ENCODE measurements at regions of chr5 and their contacts with region 1.

Region 1: DNA sequence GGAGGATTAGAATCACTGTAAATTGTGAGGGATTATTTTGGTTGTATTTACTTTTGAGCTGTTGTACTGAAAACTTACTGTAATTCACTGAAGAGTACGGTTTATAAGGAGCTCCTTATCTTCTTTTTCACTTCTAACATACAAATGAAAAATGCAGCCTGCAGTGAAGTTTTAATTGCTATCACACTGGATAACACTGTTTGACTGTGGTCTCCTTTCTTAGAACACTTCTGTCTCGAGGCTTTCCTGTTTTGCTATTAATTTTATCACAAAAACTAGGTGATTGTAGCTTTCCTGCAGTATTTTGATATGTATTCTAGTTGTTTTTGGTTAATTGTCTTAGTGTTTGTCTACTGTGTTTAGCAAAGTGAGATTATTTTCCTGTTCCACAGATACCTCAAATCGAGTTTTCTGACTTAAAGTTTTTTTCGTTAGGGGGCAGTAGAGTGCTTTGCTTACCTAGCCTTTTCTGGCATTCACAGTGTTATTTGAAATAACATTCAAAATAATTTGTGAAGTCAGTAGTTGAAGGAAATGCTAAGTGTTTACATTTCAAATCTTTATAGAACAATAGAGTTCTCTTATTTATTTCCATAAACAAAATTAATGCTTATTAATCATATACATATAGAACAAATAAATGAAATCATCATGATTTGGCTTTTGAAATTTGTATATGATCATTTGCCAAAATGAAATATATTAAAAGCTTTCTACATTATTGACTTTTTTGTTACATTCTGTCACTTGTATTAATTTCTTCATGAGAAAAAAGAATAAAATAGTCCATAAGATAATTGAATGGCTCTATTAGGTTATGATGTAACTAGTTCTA is 52.9 kb downstream of the COMMD10 start:
- H3K4me3 Mint-ChIP-seq: no peak overlapping the region
- H3K27ac Mint-ChIP-seq: no peak overlapping the region
- H3K4me1 Mint-ChIP-seq: no peaks in the 10 kb centered on the region
- H3K27me3 Mint-ChIP-seq: no peaks in the 10 kb centered on the region

Region 2: DNA sequence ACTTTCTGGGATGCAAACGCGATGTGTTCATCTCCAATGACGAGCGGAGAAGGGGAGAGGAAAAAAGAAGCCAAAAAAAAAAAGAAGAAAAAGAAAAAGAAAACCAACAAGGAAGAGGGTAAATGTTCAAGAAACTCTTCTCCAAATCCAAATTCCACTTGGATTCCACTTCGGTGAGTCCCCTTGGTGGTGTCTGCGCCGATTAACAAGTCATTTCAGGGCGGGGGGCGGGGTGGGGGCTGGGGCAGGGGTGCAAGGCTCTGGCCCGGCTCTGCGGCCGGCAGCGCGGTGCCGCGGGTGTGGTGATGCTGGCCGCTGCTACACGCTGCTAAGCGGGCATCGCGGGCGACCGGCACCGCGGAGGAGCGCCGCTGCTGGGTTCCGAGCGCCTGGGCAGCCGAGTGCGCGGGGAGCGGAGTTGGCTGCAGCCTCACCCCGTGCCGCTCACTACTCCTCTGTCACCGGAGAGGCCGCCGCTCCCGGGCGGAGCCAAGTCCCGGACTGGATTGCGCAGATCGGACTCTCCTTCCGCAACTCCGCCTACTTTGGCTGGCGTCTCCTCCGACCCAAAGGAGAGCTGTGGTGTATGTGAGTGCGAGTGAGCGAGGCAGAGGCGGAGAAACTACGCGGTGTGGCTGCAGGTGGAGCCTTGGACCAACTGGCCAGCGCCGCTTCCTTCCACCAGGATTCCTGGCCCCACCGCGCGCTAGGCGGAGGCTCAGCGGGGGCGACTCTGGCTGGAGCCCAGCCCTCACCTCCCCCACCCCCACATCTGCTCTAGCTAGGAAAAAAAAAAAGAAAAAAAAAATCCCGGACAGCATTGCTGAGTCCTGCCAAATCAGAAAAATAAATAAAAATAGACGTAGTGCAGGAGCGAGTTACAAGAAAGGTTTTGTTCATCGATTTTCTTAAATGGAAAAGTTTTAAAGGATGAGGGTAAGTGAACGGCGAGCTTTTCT is 436.9 kb after region 1 on chr5 and contains the start of gene SEMA6A:
- intact Hi-C with region 1: loop called (anchors 10 kb)
- H3K4me3 Mint-ChIP-seq: peak within 1 kb of the TSS; percentile 84
- H3K27ac Mint-ChIP-seq: no peak within 1 kb of the TSS
- H3K4me1 Mint-ChIP-seq: peaks cover 37% of the 10 kb centered on the region
- H3K27me3 Mint-ChIP-seq: peaks cover 90% of the 10 kb centered on the region

Region 3: DNA sequence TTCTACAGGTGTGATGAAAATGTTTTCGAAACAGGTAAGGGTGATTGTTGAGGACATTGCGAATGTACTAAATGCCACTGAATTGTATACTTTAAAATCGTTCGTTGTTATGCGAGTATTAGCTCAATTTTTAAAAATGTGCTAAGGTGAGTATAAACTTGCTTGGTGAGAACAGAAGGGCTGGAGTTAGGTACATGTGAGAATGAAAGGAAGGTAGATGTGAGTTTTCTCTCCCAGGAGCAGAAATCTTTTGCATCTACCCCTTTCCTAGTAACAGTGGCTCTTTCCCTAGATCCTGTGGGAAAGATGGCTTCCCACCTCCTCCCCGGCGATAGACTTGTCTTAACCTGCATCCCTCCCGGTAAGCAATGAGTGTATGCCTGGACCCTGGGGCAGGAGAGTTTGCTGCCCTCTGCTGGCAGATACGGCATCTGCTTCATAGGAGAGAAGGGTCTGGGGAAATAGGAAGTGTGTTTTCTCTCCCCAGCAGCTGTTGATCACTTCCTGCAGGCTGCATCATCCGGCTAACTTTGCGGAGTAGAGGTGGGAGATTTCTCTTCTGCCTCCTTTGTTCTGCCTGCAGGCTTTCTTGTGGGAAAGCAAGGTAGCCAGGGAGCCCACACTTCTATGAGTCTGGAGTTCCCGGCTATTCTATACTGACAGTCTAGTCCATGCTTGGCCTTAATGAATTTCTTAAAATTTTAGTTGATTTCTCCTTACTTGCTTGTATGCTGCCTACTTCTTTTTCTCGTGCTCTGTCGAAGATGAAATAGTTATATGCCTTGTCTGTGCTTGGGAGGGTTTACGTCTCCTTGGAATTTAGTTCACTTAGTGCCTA is 810.1 kb after region 1 on chr5:
- intact Hi-C with region 1: loop called (anchors 2 kb)
- H3K4me3 Mint-ChIP-seq: no peak overlapping the region
- H3K27ac Mint-ChIP-seq: no peak overlapping the region
- H3K4me1 Mint-ChIP-seq: no peaks in the 10 kb centered on the region
- H3K27me3 Mint-ChIP-seq: no peaks in the 10 kb centered on the region

Measured in dendritic cell treated with granulocyte-macrophage colony-stimulating factor and Interleukin-4, amounts not matched to agents 40 ng/mL and 50 ng/mL, for 4 days (primary cell).